GM18951 (cell line): ENCODE measurements at regions of chr17 and their contacts with region 1.

Region 1: DNA sequence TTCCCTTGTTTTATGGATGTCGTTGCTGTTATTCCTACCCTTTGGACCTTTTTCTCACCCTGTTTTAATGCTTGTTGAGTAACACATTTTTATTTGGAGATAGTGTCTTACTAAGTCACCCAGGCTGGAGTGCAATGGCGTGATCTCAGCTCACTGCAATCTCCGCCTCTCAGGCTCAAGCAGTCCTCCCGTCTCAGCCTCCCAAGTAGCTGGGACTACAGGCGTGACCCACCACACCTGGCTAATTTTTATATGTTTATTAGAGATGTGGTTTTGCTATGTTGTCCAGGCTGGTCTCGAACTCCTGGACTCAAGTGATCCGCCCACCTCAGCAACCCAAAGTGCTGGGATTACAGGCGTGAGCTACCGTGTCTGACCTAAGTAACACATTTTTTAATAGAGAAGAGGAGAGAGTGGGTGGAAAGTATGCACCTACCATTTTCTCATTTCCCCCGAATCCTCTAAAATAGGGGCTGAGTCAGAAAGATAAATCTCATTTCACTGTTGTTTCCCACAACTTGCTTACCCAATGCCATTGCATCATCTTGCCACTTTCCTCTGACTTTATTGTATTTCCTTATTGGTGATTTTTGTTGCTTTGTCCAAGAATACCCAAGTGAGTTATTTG is 7.0 kb downstream of the DHX40 start:
- POLR2A ChIP-seq: no peak

Region 2: GRCh38 chr17:59815965-59816364 is 243.6 kb after region 1 on chr17:
- in situ Hi-C with region 1: no loop called
- POLR2A ChIP-seq: no peak

Region 3: DNA sequence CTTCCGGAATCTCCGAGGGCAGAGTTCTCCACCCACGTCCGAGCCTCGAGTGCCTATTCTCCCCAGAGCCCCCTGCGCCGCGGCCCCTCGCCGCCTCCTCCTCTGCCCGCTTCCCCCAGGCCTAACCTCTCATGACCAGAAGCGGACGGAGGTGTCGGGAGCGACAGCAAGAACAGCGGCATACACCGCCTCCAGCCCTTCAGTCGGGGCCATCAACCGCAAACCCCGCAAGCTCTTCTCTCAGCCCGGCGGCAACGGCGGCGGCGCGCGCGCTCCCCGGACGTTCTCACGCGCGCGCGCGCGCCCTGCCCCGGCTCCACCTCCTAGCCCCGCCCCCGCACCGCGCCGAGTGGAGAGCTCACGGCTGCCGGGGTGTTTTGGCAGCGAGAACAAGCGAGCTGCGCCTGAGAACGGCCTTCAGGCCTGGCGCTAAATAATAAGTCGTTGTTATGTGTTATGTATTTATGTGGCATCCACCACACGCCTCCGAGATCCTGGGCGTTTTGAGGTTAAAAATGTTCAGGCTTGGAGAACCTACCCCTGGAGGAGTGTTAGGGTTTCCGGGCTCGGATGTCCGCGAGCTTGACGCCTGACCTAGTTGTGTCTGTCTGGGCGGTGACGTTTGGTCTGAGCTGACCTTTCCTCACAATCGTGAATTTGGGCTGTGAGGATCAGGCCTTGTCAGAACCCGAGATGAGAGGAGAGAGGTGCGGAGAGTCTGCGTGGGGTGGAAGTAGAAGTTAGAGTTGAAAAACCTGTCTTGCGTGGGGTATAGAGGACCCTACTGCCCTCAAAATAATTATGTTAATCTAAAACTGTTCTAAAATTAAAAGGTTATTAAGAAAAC is 392.3 kb after region 1 on chr17 and contains the start of gene RNFT1:
- in situ Hi-C with region 1: loop called (anchors 25 kb)
- POLR2A ChIP-seq: peak; percentile 75